Ovary (tissue), 10 donors: ENCODE measurements at regions of chr15 and their contacts with region 1.

Region 1: GRCh38 chr15:98845107-98845884 is 162.3 kb downstream of the PGPEP1L start:
- DNase-seq: no peak
- H3K4me3 ChIP-seq: no peak overlapping the region
- H3K27ac ChIP-seq: no peak overlapping the region
- H3K4me1 ChIP-seq: peaks cover 23% of the 10 kb centered on the region
- H3K27me3 ChIP-seq: no peaks in the 10 kb centered on the region
- CTCF ChIP-seq: no peak
- EP300 ChIP-seq: no peak
- POLR2A ChIP-seq: no peak

Region 2: GRCh38 chr15:98779463-98780071 is 65.7 kb before region 1 on chr15:
- intact Hi-C with region 1: loop called in 1 of 4 experiments (anchors 10 kb)
- DNase-seq: peak; percentile 71 to 85 (median 82)
- H3K4me3 ChIP-seq: no peak overlapping the region
- H3K27ac ChIP-seq: no peak overlapping the region
- H3K4me1 ChIP-seq: peaks cover 15% of the 10 kb centered on the region
- H3K27me3 ChIP-seq: no peaks in the 10 kb centered on the region
- CTCF ChIP-seq: peak; percentile 53 to 72 (median 59)
- EP300 ChIP-seq: no peak
- POLR2A ChIP-seq: no peak

Region 3: DNA sequence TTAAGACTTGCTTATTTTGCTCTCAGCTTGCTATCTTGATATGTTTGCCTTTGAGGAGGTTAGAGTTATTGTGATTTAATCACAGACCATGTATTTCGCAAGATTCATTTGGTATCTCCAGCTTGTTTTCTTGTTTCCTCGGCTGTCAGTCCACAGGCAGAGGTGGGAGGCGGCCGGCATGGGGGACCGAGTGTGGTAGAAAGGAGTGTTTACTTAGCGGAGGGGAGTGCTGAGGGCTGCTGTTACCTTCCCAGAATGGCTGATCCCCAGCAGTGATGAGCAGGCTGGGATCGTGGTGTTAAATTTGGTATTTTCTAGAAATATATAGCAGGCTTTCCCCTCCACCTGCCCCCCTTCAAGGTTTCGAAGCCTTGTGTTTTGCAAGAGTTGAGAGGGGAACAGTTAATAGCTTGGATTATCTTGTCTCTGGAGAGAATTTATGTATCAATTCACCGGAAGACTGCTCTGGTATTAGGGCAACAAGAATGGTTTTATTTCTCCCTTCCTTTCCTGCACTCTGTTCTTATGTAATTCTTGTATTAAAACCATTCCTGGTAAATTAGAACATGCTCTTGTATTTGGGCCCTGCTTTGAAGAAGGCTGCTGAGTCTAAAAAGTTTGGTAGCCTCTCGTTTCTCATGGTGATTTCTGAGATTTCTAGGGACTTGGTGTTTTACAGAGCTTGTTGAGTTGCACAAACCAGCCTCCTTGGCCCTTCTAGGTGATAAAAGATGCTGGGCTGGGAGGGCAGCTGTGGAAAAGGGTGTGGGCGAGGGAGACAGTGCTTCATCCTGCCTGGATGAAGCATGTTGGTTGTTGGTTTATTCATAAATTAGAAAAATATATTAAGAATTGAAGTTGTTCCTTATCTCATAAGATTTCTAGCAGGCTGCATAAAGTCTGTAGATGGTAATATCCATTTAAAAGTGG is 45.6 kb before region 1 on chr15:
- intact Hi-C with region 1: loop called in 1 of 4 experiments (anchors 10 kb)
- DNase-seq: no peak
- H3K4me3 ChIP-seq: no peak overlapping the region
- H3K27ac ChIP-seq: peak overlapping the region in 1 of 2 donors; percentile 60
- H3K4me1 ChIP-seq: peaks cover 27% of the 10 kb centered on the region
- H3K27me3 ChIP-seq: no peaks in the 10 kb centered on the region
- CTCF ChIP-seq: no peak
- EP300 ChIP-seq: no peak
- POLR2A ChIP-seq: no peak

Region 4: DNA sequence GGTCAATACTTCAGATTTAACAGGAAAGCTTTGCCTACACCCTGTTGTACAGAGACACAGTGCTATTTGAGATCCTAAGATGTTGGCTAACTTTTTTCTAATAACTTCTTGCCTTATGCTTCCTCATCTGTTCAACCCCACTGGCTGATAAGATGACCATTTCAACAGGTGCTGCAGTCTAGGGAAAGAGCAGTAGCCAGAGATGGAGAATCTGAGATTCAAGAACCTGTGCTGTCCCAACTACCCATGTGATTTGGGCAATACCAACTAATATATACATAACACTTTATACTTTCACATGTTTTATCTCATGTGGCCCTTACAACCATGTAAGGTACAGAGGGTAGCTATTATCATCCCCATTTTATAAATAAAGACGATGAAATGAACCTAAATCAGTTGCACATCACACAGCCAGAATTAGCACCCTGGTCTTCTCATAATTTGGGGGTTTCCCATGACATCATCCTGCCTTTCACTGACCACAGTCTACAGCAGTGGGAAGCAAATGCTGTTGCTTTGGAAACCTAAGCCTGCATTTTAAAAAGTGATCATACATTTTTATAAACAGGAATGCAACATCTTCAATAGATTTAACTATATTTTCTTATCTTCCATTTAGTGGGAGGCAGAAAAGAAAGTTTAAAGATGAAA is 394.4 kb after region 1 on chr15:
- intact Hi-C with region 1: no loop called
- DNase-seq: no peak
- H3K4me3 ChIP-seq: no peak overlapping the region
- H3K27ac ChIP-seq: no peak overlapping the region
- H3K4me1 ChIP-seq: no peaks in the 10 kb centered on the region
- H3K27me3 ChIP-seq: no peaks in the 10 kb centered on the region
- CTCF ChIP-seq: no peak
- EP300 ChIP-seq: no peak
- POLR2A ChIP-seq: no peak